Activated CD4-positive, alpha-beta T cell treated with anti-CD3 and anti-CD28 coated beads, Interleukin-2, amount 10 ng/mL, durations not matched to agents 24 days and 14 days (primary cell): ENCODE measurements at regions of chr1 and their contacts with region 1.

Region 1: DNA sequence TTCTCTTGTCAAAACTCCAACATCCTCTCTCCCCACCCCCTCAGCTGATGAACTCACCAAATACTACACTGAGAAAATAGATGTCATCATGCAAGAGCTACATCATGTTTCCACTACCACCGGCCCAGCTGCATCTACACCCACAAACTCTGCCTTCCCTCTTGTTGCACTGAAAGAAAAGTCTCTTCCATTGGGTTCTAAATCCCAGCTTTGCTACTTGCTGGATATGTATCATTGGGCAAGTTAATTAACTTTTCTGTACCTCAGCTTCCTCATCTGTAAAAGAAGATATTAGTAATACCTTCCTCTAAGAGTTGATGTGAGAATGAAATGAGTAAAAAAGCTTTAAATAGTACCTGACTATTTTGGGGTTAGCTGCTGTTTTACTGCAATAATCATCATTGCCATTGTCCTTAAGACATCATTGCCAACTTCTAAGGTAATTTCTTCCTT is 108.6 kb downstream of the OLFML2B start:
- DNase-seq: peak; percentile 60
- H3K4me3 Mint-ChIP-seq: no peak overlapping the region
- H3K27ac Mint-ChIP-seq: no peak overlapping the region
- H3K4me1 Mint-ChIP-seq: peaks cover 16% of the 10 kb centered on the region
- H3K27me3 Mint-ChIP-seq: no peaks in the 10 kb centered on the region

Region 2: DNA sequence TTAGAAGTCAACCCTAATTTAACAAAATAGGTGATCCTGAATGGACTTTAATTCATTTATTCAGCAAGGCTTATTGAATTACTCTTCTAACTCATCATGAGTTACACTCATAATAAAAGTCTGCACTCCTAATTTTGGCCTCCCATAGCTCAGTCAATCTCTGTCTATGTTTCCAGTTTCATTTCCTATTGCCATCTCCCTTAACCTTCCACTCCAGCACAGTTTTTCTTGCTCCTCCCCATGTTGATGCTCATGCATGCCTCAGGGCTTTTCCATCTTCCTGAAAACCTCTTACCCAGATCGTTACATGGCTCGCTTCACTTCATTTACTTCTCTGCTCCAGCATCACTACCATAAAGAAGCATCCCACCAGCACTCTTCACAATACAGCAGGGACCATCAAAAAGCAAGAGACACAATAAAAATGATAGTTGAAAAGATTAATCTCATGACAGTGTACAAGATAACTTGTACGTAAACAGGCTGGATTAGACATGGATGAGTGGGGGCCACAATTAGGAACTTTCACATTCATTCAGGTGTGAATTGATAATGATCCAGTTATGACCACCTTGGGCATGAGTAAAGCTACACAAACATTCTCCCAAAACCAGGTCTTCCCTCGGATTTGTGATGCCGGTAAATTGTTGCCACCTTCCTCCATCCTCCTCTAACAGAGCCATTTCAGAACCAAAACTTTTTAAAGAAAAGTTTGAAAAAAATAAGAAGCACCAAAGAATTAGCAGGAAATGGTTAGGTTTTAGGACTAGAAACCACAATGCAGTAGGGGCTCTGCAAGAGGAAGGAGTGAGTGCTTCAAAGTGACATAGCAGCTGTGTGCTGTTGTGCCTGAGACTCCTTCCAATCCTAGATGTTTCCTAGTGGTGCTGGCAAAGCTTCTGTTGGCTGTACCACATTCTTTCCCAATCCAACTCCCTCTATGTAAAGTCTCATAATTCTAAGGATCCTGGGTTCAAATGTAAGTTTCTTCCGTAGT is 18.8 kb after region 1 on chr1:
- intact Hi-C with region 1: loop called (anchors 2 kb)
- DNase-seq: peak; percentile 76
- H3K4me3 Mint-ChIP-seq: peak overlapping the region; percentile 15
- H3K27ac Mint-ChIP-seq: peak overlapping the region; percentile 62
- H3K4me1 Mint-ChIP-seq: peaks cover 27% of the 10 kb centered on the region
- H3K27me3 Mint-ChIP-seq: no peaks in the 10 kb centered on the region